Heart right ventricle (tissue), 16 donors: ENCODE measurements at regions of chr3 and their contacts with region 1.

Region 1: GRCh38 chr3:76585794-76586392 is 454.0 kb upstream of the ROBO2 start:
- DNase-seq: no peak
- ATAC-seq: no peak
- H3K4me3 ChIP-seq: no peak overlapping the region
- H3K27ac ChIP-seq: no peak overlapping the region
- H3K4me1 ChIP-seq: peaks cover 0 to 8% (median 0%) of the 10 kb centered on the region in 9 donors
- H3K27me3 ChIP-seq: no peaks in the 10 kb centered on the region
- CTCF ChIP-seq: peak; percentile 18 to 59 (median 55)

Region 2: GRCh38 chr3:76024640-76025039 is 561.3 kb before region 1 on chr3:
- intact Hi-C with region 1: loop called in 2 of 10 experiments (anchors 10 kb)
- DNase-seq: no peak
- ATAC-seq: no peak
- H3K4me3 ChIP-seq: no peak overlapping the region
- H3K27ac ChIP-seq: no peak overlapping the region
- H3K4me1 ChIP-seq: no peaks in the 10 kb centered on the region
- H3K27me3 ChIP-seq: no peaks in the 10 kb centered on the region
- CTCF ChIP-seq: peak in 7 of 9 donors; percentile 21 to 50 (median 32)

Region 3: DNA sequence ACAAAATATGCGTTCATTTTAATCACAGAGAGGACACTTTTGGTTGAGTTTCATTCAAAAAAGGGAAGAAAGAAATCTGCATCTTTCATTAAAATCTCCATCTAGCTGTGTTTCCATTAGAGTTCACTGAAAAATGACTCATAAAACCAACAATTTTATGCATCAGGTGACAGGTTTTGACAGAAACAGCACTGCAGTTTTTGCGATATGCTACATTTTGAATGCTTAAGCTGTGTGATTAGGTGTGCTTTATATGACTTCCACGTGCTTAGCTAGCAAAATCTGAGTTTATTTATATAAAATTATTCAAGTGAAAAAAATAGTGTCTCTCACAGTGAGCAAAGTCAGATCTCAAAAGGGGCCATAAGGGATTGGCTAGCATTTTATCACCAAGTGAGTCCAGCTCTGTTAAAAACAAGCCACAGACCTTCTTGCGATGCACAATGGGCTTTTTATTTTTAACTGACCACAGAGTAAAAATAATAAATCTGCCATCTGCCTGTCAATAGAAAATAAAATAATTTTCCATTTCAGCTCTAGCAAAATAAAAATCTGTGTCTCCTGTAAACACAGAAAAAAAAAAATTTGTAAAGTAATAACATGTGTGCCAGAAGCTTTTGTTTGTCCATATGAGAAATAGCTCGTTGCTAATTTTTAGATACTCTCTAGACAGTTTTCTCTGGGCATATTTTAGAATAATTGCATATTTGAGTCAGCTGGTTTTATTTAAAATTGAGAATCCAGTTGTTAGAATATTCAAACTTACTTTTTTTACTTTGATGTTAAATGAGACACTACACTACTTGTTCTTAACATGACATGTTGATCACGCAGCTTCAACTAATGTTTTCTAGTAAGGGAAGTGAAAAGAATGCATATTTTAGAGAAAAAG is 863.8 kb after region 1 on chr3:
- intact Hi-C with region 1: no loop called
- DNase-seq: no peak
- ATAC-seq: no peak
- H3K4me3 ChIP-seq: no peak overlapping the region
- H3K27ac ChIP-seq: no peak overlapping the region
- H3K4me1 ChIP-seq: no peaks in the 10 kb centered on the region
- H3K27me3 ChIP-seq: no peaks in the 10 kb centered on the region
- CTCF ChIP-seq: no peak